Activated naive CD4-positive, alpha-beta T cell treated with anti-CD3 and anti-CD28 coated beads for 36 hours (primary cell): ENCODE measurements at regions of chr7 and their contacts with region 1.

Region 1: DNA sequence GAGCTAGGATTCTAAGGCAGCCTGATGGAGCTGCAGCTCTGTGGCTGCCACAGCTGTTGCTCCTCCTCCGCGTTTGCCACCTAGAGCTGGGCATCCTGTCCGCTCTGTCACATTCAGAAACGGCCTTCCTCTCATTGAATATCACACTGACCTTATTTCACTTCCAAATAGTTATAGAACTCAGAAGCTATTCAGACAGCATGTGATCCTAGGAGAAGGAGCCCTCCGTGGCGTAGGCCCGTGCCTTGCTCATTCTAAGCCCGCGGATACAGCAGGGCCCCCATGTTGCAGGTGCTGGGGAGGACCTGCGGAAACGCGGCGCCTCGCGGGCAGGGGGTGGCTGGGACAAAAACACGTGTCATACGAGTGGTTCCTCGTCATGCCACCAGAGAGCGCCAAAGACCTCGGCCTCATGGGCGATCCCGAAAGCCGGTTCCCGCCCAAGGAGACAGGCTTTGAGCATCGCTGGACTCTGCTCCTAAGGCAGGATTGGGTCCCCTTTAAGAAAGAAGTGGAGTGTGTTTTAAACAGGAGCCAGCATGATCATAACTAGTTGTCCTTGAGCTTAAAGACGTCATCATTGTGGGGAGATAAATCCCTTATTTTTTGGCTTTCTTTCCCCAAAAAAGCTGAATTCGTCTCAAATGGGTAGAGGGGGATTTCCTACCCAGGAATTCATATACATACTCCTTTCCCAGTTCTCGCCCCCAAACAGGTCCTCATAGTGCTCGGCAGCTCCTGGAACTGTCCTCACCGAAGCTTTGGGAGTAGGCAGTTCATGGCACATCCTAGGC is 17.9 kb upstream of the FIGNL1 start:
- DNase-seq: peak; percentile 90
- H3K4me3 Mint-ChIP-seq: no peak overlapping the region
- H3K27ac Mint-ChIP-seq: no peak overlapping the region
- H3K4me1 Mint-ChIP-seq: peaks cover 9% of the 10 kb centered on the region
- H3K27me3 Mint-ChIP-seq: no peaks in the 10 kb centered on the region

Region 2: DNA sequence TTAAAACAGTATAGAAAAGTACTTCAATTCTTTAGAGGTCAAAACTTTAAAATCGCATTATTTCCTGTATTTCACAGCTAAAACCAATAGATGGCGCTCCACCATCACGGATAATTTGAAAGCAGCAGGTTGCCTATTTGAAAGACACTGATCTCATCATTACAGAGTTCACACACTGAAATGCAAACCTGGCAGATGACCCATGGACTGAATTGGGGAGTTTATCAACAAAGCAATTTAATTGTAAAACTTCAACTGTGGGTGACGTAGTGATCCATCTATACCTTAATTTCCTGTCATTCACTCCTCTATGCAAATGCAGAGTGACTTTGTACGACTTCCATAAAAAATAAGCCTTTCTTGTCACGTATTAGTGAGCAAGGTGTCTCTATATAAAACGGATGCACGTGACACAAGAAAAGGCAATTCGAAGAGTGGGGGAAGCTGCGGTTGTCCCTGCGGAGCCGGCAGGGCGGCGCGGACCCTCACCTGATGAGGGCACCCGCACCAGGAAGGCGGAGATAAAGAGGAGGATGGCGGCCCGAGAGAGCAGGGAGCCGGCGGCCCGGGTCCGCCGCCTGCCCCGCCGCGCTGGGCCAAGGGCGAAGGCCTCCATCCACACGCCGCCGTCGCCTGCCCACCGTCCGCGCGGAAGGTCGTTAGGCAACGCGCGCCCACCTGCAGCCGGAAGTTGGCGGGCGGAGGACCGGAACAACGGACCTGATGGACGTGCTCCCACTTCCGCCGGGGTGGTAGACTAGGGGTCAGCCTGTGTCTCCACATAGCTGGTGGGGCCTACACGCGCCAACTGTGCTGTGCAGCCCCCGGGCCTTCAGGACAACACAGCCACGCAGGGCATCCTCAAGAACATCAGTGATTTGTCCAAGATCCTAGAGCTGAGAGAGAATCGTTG is 375.2 kb before region 1 on chr7 and contains the start of gene ZPBP:
- CTCF ChIA-PET with region 1: interaction called, 17 read pairs
- intact Hi-C with region 1: loop called (anchors 1 kb)
- DNase-seq: peak; percentile 67
- H3K4me3 Mint-ChIP-seq: peak within 1 kb of the TSS; percentile 76
- H3K27ac Mint-ChIP-seq: peak within 1 kb of the TSS; percentile 81
- H3K4me1 Mint-ChIP-seq: peaks cover 7% of the 10 kb centered on the region
- H3K27me3 Mint-ChIP-seq: no peaks in the 10 kb centered on the region
- total RNA-seq, gene ZPBP: not detected

Region 3: DNA sequence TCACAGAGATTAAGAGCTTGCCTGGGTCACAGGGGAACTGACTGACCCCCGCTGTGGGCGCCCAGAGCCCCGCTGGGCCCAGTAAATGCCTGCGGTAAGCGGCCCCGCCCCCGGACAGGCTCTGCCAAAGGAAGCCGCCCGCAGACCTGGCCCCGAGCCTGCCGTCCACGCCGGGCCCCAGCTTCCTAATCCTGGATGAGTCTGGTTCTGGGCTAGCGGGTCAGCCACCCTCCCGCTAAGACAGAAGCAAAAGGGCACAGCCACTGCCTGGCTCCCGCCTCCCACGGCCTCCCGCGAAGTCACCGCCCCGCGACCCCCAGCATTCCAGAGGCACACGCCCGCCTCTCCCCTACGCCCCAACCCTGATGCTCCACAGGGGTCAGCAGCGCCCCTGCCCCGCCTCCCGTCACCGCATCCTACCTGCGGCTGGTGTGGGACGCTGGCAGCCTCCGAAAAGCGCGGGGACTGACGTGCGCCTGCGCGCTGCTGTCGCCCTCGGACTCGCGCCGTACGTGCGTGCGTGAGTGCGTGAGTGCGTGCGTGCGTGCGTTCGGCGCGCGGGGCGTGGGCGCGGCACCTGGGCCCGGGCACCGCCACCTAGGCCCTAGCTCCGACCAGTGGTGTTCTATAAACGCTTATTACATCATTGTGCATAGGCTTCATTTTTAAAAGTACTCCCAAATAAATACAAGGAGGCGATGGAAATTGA is 18.0 kb before region 1 on chr7 and contains the start of gene FIGNL1:
- CTCF ChIA-PET with region 1: interaction called, 10 read pairs
- intact Hi-C with region 1: no loop called
- DNase-seq: peak; percentile 86
- H3K4me3 Mint-ChIP-seq: peak within 1 kb of the TSS; percentile 94
- H3K27ac Mint-ChIP-seq: peak within 1 kb of the TSS; percentile 91
- H3K4me1 Mint-ChIP-seq: peaks cover 45% of the 10 kb centered on the region
- H3K27me3 Mint-ChIP-seq: no peaks in the 10 kb centered on the region
- total RNA-seq, gene FIGNL1: 43.7 to 44.4 TPM

Region 4: GRCh38 chr7:50632561-50633413 is 164.8 kb after region 1 on chr7:
- CTCF ChIA-PET with region 1: interaction called, 49 read pairs
- intact Hi-C with region 1: loop called (anchors 1 kb)
- DNase-seq: peak; percentile 70
- H3K4me3 Mint-ChIP-seq: no peak overlapping the region
- H3K27ac Mint-ChIP-seq: no peak overlapping the region
- H3K4me1 Mint-ChIP-seq: no peaks in the 10 kb centered on the region
- H3K27me3 Mint-ChIP-seq: peaks cover 2% of the 10 kb centered on the region

Region 5: GRCh38 chr7:51000956-51001355 is 532.9 kb after region 1 on chr7:
- CTCF ChIA-PET with region 1: no interaction called
- intact Hi-C with region 1: loop called (anchors 1 kb)
- DNase-seq: no peak
- H3K4me3 Mint-ChIP-seq: no peak overlapping the region
- H3K27ac Mint-ChIP-seq: no peak overlapping the region
- H3K4me1 Mint-ChIP-seq: no peaks in the 10 kb centered on the region
- H3K27me3 Mint-ChIP-seq: no peaks in the 10 kb centered on the region

Region 6: GRCh38 chr7:51162724-51163329 is 694.8 kb after region 1 on chr7:
- CTCF ChIA-PET with region 1: interaction called, 45 read pairs
- intact Hi-C with region 1: loop called (anchors 1 kb)
- DNase-seq: peak; percentile 92
- H3K4me3 Mint-ChIP-seq: no peak overlapping the region
- H3K27ac Mint-ChIP-seq: no peak overlapping the region
- H3K4me1 Mint-ChIP-seq: peaks cover 9% of the 10 kb centered on the region
- H3K27me3 Mint-ChIP-seq: peaks cover 12% of the 10 kb centered on the region